ENCODE measurements at regions of chr3 and their contacts with region 1.

Region 1: DNA sequence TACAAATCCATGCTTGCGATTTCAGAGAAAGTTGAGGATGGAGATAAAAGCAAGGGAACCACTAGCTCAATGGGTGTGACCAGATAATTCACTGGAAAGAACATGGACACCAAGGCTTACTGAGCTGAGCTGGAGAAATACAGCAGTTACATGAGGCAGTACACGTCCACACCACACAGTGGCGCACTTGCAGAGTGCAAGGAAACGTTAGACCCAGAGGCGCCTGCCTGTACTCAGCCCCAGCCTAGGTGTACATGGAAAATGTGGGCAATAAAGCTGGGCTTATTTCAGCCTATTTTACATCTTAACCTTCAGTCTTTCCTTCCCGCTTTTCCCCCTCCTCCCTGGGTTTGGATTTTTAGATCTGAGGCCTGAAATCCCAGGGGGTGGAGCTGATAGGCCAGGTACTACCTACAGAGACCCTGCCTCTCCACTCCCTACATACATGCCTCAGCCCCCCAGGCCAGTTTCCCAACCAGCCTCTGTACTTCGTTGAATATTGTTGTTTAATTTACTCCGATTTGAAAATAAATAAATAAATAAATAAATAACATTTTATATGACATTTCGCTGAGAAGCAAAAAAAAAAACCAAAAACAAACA is 60.1 kb downstream of the PCOLCE2 start:
- DNase-seq: peak; percentile 73 to 89 (median 76)
- ATAC-seq: peak; percentile 99
- H3K4me3 ChIP-seq: no peak overlapping the region
- H3K27ac ChIP-seq: no peak overlapping the region
- H3K4me1 ChIP-seq: no peaks in the 10 kb centered on the region
- H3K27me3 ChIP-seq: no peaks in the 10 kb centered on the region; a peak in 1 of 5 replicates
- CTCF ChIP-seq: peak; percentile 93 to 96 (median 95)
- EP300 ChIP-seq: no peak
- POLR2A ChIP-seq: no peak
- RAD21 ChIP-seq: peak; percentile 87 to 95

Region 2: DNA sequence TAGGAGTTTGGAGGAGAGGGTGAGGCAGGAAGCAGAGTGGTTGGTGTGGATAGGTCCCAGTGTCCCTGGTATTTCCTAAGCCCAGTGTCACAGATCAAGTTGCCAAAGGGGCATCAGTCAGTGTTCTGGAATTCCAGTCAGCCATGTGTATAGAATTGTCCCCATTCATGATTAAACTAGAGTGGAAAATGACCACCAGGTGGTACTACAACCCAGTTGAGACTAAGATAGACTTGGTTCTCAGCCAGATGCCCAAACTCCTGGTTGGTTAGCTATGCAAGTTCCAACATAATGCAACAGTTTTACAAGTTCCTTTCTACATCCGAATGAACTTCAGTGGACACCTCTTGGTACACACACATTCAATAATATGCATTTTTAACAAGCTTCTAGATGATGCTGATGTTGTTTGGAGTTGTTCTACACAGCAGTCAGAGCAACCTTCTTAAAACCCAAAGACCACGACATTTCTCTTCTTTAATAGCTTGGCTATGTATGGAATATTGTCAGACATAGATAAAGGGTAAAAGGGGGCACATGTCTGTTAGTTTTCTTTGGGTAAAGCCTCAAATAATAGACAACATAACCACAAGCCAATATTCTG is 241.9 kb before region 1 on chr3:
- CTCF ChIA-PET with region 1: no interaction called
- POLR2A ChIA-PET with region 1: interaction called, 3 read pairs
- in situ Hi-C with region 1: loop called (anchors 10 kb)
- intact Hi-C with region 1: loop called (anchors 2 kb)
- DNase-seq: peak; percentile 43 to 77 (median 54)
- ATAC-seq: peak; percentile 93
- H3K4me3 ChIP-seq: no peak overlapping the region
- H3K27ac ChIP-seq: no peak overlapping the region
- H3K4me1 ChIP-seq: no peaks in the 10 kb centered on the region
- H3K27me3 ChIP-seq: no peaks in the 10 kb centered on the region
- CTCF ChIP-seq: peak; percentile 70 to 83 (median 72)
- EP300 ChIP-seq: no peak
- POLR2A ChIP-seq: no peak
- RAD21 ChIP-seq: peak; percentile 90 to 93

Region 3: GRCh38 chr3:142595951-142596725 is 232.7 kb before region 1 on chr3 and contains the start of gene PLS1:
- CTCF ChIA-PET with region 1: no interaction called
- POLR2A ChIA-PET with region 1: no interaction called
- in situ Hi-C with region 1: loop called (anchors 10 kb)
- intact Hi-C with region 1: no loop called
- DNase-seq: peak; percentile 95 to 98 (median 98)
- ATAC-seq: peak; percentile 92
- H3K4me3 ChIP-seq: peak within 1 kb of the TSS; percentile 72
- H3K27ac ChIP-seq: peak within 1 kb of the TSS; percentile 62
- H3K4me1 ChIP-seq: peaks cover 0 to 14% of the 10 kb centered on the region in 2 experiments; a peak in 3 of 5 replicates
- H3K27me3 ChIP-seq: no peaks in the 10 kb centered on the region
- CTCF ChIP-seq: 0 out of 6 replicates have a peak, but pooled peaks of 1 of the 3 experiments have one; percentile 1
- EP300 ChIP-seq: no peak
- POLR2A ChIP-seq: peak; percentile 88
- RAD21 ChIP-seq: peak in 1 of 2 experiments; percentile 34; a peak in 2 of 4 replicates
- polyA plus RNA-seq, gene PLS1: 10.6 to 21.3 TPM

Region 4: GRCh38 chr3:142779591-142779990 is 49.2 kb before region 1 on chr3:
- CTCF ChIA-PET with region 1: no interaction called
- POLR2A ChIA-PET with region 1: no interaction called
- in situ Hi-C with region 1: no loop called
- intact Hi-C with region 1: no loop called
- DNase-seq: no peak
- ATAC-seq: no peak
- H3K4me3 ChIP-seq: no peak overlapping the region
- H3K27ac ChIP-seq: no peak overlapping the region
- H3K4me1 ChIP-seq: peaks cover 0 to 3% of the 10 kb centered on the region in 2 experiments; a peak in 1 of 5 replicates
- H3K27me3 ChIP-seq: no peaks in the 10 kb centered on the region
- CTCF ChIP-seq: no peak
- EP300 ChIP-seq: no peak
- POLR2A ChIP-seq: no peak
- RAD21 ChIP-seq: no peak

Region 5: DNA sequence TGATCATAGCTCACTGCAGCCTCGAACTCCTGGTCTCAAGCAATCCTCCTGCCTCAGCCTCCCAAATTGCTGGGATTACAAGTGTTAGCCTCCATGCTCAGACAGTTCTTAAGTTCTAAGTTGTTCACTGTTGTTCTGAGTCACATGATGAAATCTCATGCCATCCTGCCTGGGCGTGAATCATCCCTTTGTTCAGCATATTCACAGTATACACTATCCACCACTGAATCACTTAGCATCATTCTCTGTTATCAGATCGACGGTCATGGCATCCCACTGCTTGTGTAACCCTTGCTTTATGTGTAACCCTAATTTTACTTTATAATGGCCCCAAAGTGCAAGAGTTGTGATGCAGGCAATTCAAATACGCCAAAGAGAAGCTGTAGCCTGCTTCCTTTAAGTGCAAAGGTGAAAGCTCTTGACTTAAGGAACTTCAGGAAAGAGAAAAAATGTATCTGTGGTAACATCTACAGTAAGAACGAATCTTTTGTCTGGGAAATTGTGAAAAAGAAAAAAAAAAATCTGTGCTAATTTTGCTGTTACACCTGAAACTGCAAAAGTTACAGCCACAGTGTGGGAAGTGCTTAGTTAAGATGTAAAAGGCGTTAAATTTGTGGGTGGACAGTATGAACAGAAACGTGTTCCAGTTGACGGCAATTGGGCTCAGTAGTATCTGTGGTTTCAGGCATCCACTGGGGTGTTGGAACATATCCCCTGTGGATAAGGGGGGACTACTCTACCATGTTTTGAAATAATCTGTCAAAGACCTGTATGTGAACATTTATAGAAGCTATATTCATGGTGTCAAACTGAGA is 20.5 kb before region 1 on chr3:
- CTCF ChIA-PET with region 1: no interaction called
- POLR2A ChIA-PET with region 1: no interaction called
- in situ Hi-C with region 1: no loop called
- intact Hi-C with region 1: no loop called
- DNase-seq: peak in 1 of 4 experiments; percentile 21
- ATAC-seq: peak; percentile 77
- H3K4me3 ChIP-seq: no peak overlapping the region
- H3K27ac ChIP-seq: no peak overlapping the region
- H3K4me1 ChIP-seq: no peaks in the 10 kb centered on the region
- H3K27me3 ChIP-seq: no peaks in the 10 kb centered on the region
- CTCF ChIP-seq: no peak
- EP300 ChIP-seq: peak; percentile 42; the same call in 1 of the 2 replicates
- POLR2A ChIP-seq: no peak
- RAD21 ChIP-seq: no peak

Region 6: DNA sequence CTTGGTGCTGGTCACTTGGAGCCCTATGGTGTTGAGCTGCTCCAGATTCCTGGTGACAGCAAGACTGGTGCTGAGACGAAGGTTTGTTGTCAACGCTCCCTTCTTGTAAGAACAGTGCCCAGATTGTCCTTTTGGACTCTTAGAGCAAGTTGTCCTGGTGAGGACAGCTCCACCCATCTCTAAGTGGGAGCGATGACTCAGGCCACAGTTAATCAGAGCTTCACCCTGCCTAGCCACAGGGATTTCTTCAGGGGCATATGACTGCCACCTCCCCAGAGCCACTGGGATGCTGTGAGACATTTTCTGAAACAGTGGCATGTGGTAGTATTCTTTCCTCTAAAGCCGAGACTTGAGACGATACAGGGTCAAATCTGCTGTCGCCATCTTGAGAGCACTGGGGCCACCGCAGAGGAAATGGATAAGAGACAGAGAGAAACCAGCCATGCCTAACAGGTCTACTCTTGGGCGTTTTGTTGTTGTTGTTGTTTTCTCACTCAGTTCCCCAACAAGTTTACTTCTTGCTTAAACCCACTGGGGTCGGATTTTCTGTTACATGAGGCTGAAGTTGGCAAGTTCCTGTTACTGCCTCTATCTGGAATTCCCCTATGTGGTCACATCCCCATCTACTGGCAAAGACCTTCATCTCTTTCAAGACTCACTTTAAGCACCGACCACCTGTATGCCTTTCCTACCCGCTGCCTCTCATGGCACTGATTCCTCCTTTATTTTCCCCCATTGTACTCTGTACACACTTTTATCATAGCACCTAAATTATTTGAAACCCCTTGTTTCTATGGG is 76.0 kb after region 1 on chr3:
- CTCF ChIA-PET with region 1: no interaction called
- POLR2A ChIA-PET with region 1: interaction called, 3 read pairs
- in situ Hi-C with region 1: no loop called
- intact Hi-C with region 1: loop called (anchors 1 kb)
- DNase-seq: peak in 2 of 4 experiments; percentile 35 to 49
- ATAC-seq: peak; percentile 81
- H3K4me3 ChIP-seq: no peak overlapping the region
- H3K27ac ChIP-seq: no peak overlapping the region
- H3K4me1 ChIP-seq: no peaks in the 10 kb centered on the region; a peak in 2 of 5 replicates
- H3K27me3 ChIP-seq: 0 out of 5 replicates have a peak, but pooled peaks cover 0 to 3% of the 10 kb centered on the region in 2 experiments
- CTCF ChIP-seq: peak; percentile 36 to 56 (median 53); a peak in 4 of 6 replicates
- EP300 ChIP-seq: no peak
- POLR2A ChIP-seq: no peak
- RAD21 ChIP-seq: peak; percentile 63 to 77

Region 7: GRCh38 chr3:142987080-142987700 is 158.4 kb after region 1 on chr3:
- CTCF ChIA-PET with region 1: interaction called, 13 read pairs
- POLR2A ChIA-PET with region 1: no interaction called
- in situ Hi-C with region 1: loop called (anchors 5 kb)
- intact Hi-C with region 1: loop called (anchors 1 kb)
- DNase-seq: peak in 3 of 4 experiments; percentile 37 to 59 (median 47)
- ATAC-seq: peak; percentile 76
- H3K4me3 ChIP-seq: no peak overlapping the region
- H3K27ac ChIP-seq: no peak overlapping the region
- H3K4me1 ChIP-seq: peaks cover 0 to 19% of the 10 kb centered on the region in 2 experiments; a peak in 3 of 5 replicates
- H3K27me3 ChIP-seq: no peaks in the 10 kb centered on the region
- CTCF ChIP-seq: peak; percentile 50 to 77 (median 52); a peak in 4 of 6 replicates
- EP300 ChIP-seq: no peak
- POLR2A ChIP-seq: no peak
- RAD21 ChIP-seq: peak; percentile 73 to 83

Region 8: DNA sequence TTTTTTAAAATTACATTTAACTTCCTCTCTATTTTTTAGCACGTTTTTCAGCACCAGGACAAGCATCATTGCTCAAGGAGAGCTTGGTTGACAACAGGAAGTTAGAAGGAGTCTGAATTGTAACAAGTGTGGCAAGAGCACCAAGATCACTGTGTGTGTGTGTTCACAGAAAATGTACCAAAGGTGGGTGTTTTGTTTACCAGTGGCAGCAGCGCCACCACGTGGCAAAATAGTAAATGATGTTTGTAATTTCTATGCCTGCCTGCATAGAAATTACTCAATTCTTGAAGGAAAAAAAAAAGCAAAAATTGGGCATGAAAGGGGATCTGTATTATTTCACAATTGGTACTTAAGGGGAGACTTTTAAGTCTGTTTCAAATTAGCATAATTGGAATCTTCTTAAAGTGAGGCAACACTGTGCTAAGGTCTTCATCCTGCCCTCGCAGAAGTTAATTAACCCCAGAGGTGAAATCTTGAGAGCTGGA is 165.2 kb after region 1 on chr3:
- CTCF ChIA-PET with region 1: interaction called, 13 read pairs
- POLR2A ChIA-PET with region 1: interaction called, 3 read pairs
- in situ Hi-C with region 1: loop called (anchors 5 kb)
- intact Hi-C with region 1: loop called (anchors 1 kb)
- DNase-seq: peak; percentile 55 to 85 (median 63)
- ATAC-seq: peak; percentile 74
- H3K4me3 ChIP-seq: no peak overlapping the region
- H3K27ac ChIP-seq: no peak overlapping the region
- H3K4me1 ChIP-seq: peaks cover 8 to 22% of the 10 kb centered on the region in 2 experiments; a peak in 3 of 5 replicates
- H3K27me3 ChIP-seq: no peaks in the 10 kb centered on the region
- CTCF ChIP-seq: peak; percentile 73 to 88 (median 74)
- EP300 ChIP-seq: no peak
- POLR2A ChIP-seq: no peak
- RAD21 ChIP-seq: peak; percentile 74 to 87

Region 9: GRCh38 chr3:143001369-143002082 is 172.7 kb after region 1 on chr3 and contains the start of gene U2SURP:
- CTCF ChIA-PET with region 1: no interaction called
- POLR2A ChIA-PET with region 1: interaction called, 12 read pairs
- in situ Hi-C with region 1: no loop called
- intact Hi-C with region 1: no loop called
- DNase-seq: peak; percentile 88 to 98 (median 90)
- ATAC-seq: peak; percentile 74
- H3K4me3 ChIP-seq: peak within 1 kb of the TSS; percentile 94
- H3K27ac ChIP-seq: peak within 1 kb of the TSS; percentile 99
- H3K4me1 ChIP-seq: peaks cover 6 to 28% of the 10 kb centered on the region in 2 experiments; a peak in 4 of 5 replicates
- H3K27me3 ChIP-seq: no peaks in the 10 kb centered on the region
- CTCF ChIP-seq: 0 out of 6 replicates have a peak, but pooled peaks of 1 of the 3 experiments have one; percentile 14
- EP300 ChIP-seq: peak; percentile 75
- POLR2A ChIP-seq: peak; percentile 88
- RAD21 ChIP-seq: no peak
- polyA plus RNA-seq, gene U2SURP: 191 to 322 TPM

Measured in K562 (cell line).